Naive thymus-derived CD4-positive, alpha-beta T cell (primary cell): ENCODE measurements at regions of chr2 and their contacts with region 1.

Region 1: DNA sequence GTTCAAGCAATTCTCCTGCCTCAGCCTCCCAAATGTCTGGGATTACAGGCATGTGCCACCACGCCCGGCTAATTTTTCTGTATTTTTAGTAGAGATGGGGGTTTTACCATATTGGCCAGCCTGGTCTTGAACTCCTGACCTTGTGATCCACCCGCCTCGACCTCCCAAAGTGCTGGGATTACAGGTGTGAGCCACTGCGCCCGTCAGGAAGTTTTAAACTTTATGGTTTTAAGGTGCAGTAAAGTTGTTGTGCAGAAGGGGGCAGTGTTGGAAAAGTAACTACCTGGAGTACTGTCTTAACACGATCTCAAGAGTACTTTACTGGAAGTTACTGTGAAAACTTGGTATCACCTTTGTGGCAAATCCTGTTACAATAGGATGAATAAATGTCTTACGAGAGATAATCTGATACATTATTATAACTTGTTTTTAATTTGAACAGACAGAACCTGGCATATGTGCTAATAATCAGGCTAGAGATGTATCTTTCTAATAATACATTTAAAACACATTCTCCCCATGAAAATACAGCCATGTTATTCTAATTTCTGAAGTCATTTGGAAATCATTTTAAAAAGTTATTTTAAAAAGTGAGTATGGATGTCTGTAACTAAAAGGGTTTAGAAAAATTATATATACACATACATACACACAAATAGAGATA is 10.8 kb downstream of the SPDYA start:
- DNase-seq: peak in 8 of 9 donors; percentile 39 to 74 (median 60)
- ATAC-seq: peak; percentile 93
- H3K4me3 ChIP-seq: no peak overlapping the region
- H3K4me3 Mint-ChIP-seq: no peak overlapping the region
- H3K27ac ChIP-seq: no peak overlapping the region
- H3K27ac Mint-ChIP-seq: peak overlapping the region in 1 of 9 donors; percentile 7
- H3K4me1 ChIP-seq: no peaks in the 10 kb centered on the region
- H3K4me1 Mint-ChIP-seq: peaks cover 0 to 5% (median 2%) of the 10 kb centered on the region in 7 donors
- H3K27me3 ChIP-seq: no peaks in the 10 kb centered on the region
- H3K27me3 Mint-ChIP-seq: peaks cover 0 to 3% (median 0%) of the 10 kb centered on the region in 5 donors

Region 2: GRCh38 chr2:28810384-28811285 is 10.8 kb before region 1 on chr2 and contains the start of gene SPDYA:
- CTCF ChIA-PET with region 1: interaction called, 7 read pairs
- POLR2A ChIA-PET with region 1: interaction called, 3 read pairs
- intact Hi-C with region 1: loop called in 1 of 2 experiments (anchors 1 kb)
- DNase-seq: peak; percentile 65 to 88 (median 77)
- ATAC-seq: peak; percentile 96
- H3K4me3 ChIP-seq: peak within 1 kb of the TSS; percentile 63
- H3K4me3 Mint-ChIP-seq: peak within 1 kb of the TSS; percentile 76 to 94 (median 84)
- H3K27ac ChIP-seq: peak within 1 kb of the TSS; percentile 50
- H3K27ac Mint-ChIP-seq: peak within 1 kb of the TSS; percentile 11 to 73 (median 59)
- H3K4me1 ChIP-seq: peaks cover 5 to 9% of the 10 kb centered on the region in 2 donors
- H3K4me1 Mint-ChIP-seq: peaks cover 7 to 23% (median 16%) of the 10 kb centered on the region in 7 donors
- H3K27me3 ChIP-seq: no peaks in the 10 kb centered on the region
- H3K27me3 Mint-ChIP-seq: peaks cover 0 to 8% (median 0%) of the 10 kb centered on the region in 5 donors
- total RNA-seq, gene SPDYA: 1.3 to 9.8 (median 4.6) TPM

Region 3: GRCh38 chr2:28894470-28895177 is 73.2 kb after region 1 on chr2 and contains the start of gene WDR43:
- CTCF ChIA-PET with region 1: interaction called, 7 read pairs
- POLR2A ChIA-PET with region 1: interaction called, 3 read pairs
- intact Hi-C with region 1: loop called (anchors 1 to 10 kb)
- DNase-seq: peak; percentile 97 to 100 (median 99)
- ATAC-seq: peak; percentile 100
- H3K4me3 ChIP-seq: peak within 1 kb of the TSS; percentile 88
- H3K4me3 Mint-ChIP-seq: peak within 1 kb of the TSS; percentile 91 to 99 (median 98)
- H3K27ac ChIP-seq: peak within 1 kb of the TSS; percentile 78
- H3K27ac Mint-ChIP-seq: peak within 1 kb of the TSS; percentile 91 to 99 (median 94)
- H3K4me1 ChIP-seq: peaks cover 28% of the 10 kb centered on the region in 2 donors
- H3K4me1 Mint-ChIP-seq: peaks cover 31 to 49% (median 43%) of the 10 kb centered on the region in 7 donors
- H3K27me3 ChIP-seq: no peaks in the 10 kb centered on the region
- H3K27me3 Mint-ChIP-seq: peaks cover 0 to 2% (median 0%) of the 10 kb centered on the region in 5 donors
- total RNA-seq, gene WDR43: 49.6 to 75.0 (median 63.9) TPM

Region 4: GRCh38 chr2:28952816-28953211 is 131.4 kb after region 1 on chr2:
- CTCF ChIA-PET with region 1: no interaction called
- POLR2A ChIA-PET with region 1: no interaction called
- intact Hi-C with region 1: loop called (anchors 1 to 2 kb)
- DNase-seq: peak in 1 of 9 donors; percentile 12
- ATAC-seq: peak; percentile 56
- H3K4me3 ChIP-seq: no peak overlapping the region
- H3K4me3 Mint-ChIP-seq: no peak overlapping the region
- H3K27ac ChIP-seq: no peak overlapping the region
- H3K27ac Mint-ChIP-seq: peak overlapping the region in 3 of 9 donors; percentile 4 to 28 (median 22)
- H3K4me1 ChIP-seq: no peaks in the 10 kb centered on the region
- H3K4me1 Mint-ChIP-seq: peaks cover 0 to 12% (median 0%) of the 10 kb centered on the region in 7 donors
- H3K27me3 ChIP-seq: no peaks in the 10 kb centered on the region
- H3K27me3 Mint-ChIP-seq: peaks cover 0 to 6% (median 0%) of the 10 kb centered on the region in 5 donors

Region 5: DNA sequence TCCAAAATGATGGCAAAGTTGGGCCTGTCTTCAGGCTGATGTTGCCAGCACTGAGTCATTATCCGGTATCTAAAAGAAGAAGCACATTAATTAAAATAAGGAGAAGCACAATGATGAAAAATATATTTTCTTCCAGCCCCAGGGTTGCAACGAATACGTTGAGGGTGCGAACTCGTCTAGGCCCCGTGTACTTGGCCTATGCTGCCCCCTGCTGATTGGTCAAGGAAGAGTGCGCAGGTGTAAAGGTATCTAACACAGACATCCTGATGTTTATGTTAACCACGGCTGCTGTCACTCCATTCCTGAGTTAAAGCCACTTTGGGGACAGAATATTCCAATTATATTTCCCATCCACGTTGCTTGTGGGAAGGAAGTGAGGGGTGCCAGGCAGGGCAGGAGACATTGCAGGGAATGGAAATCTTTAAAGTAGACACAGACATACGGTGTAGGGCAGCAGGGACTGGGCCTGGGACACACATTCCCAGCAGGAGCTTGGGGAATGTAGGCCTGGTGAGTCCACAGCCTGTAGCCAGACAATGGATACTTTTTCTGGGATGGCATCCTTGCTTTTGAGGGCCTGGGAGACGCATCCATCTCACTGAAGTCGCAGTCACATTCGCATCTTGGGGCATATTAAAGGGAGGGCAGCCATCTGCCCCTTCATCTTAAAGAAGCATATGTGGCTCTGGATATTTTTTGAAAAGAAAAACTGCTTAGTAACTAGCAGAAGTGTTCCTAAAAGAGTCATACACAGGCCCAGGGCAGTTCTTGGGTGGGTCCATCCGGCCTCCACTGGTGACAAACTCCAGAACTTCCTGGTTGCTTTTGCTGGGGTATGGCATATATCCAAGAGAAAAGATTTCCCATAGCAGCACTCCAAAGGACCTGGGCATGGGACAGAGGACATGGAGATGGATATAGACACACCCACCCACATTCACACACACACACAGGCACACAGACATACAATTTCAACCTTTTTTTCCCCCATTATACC is 375.7 kb after region 1 on chr2:
- CTCF ChIA-PET with region 1: interaction called, 3 read pairs
- POLR2A ChIA-PET with region 1: no interaction called
- intact Hi-C with region 1: loop called (anchors 1 kb)
- DNase-seq: peak; percentile 46 to 86 (median 73)
- ATAC-seq: peak; percentile 96
- H3K4me3 ChIP-seq: no peak overlapping the region
- H3K4me3 Mint-ChIP-seq: no peak overlapping the region
- H3K27ac ChIP-seq: no peak overlapping the region
- H3K27ac Mint-ChIP-seq: peak overlapping the region in 1 of 9 donors; percentile 67
- H3K4me1 ChIP-seq: no peaks in the 10 kb centered on the region
- H3K4me1 Mint-ChIP-seq: peaks cover 0 to 9% (median 5%) of the 10 kb centered on the region in 7 donors
- H3K27me3 ChIP-seq: no peaks in the 10 kb centered on the region
- H3K27me3 Mint-ChIP-seq: no peaks in the 10 kb centered on the region

Region 6: GRCh38 chr2:29351916-29352591 is 530.6 kb after region 1 on chr2:
- CTCF ChIA-PET with region 1: no interaction called
- POLR2A ChIA-PET with region 1: no interaction called
- intact Hi-C with region 1: no loop called
- DNase-seq: no peak
- ATAC-seq: no peak
- H3K4me3 ChIP-seq: no peak overlapping the region
- H3K4me3 Mint-ChIP-seq: no peak overlapping the region
- H3K27ac ChIP-seq: no peak overlapping the region
- H3K27ac Mint-ChIP-seq: no peak overlapping the region
- H3K4me1 ChIP-seq: no peaks in the 10 kb centered on the region
- H3K4me1 Mint-ChIP-seq: no peaks in the 10 kb centered on the region
- H3K27me3 ChIP-seq: peaks cover 0 to 3% of the 10 kb centered on the region in 2 donors
- H3K27me3 Mint-ChIP-seq: peaks cover 5 to 20% (median 8%) of the 10 kb centered on the region in 5 donors